ENCODE measurements at regions of chr4 and their contacts with region 1.

Region 1: DNA sequence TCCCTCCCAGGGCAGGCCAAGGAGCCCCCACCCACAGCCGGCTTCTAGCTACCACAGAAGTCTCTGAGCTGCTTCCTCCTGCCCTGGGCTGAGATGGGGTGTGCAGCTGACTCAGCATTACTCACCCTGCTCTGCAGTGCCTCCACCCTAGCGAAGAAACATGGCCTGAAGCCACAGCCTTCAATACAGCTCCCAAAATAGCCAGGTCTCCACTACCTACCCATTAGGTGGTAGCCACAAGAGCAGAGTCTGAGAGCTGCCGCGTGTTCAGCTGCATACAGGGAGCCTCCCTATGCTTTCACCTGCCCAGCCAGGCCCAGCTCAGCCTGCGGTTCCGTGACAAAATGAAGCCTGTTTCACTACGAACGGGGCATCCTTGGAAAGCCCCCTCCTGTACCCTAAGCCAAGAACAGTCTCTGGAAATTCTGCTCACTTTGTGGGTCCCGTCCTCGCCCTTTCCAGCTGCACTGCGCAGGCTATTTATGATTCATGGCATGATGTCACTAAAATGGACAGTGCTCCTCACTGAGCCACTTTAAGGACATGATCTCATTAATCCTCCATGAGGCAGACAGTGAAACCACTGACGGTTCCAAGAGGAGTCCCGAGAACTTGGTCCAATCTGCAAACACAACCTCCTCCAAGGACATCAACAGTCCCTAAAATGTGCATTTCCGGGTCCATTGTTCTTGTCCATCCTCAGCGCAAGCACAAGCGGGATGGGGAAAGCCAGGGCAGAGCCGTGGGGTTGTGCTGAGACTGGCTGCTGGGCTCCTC is 20.2 kb downstream of the WDR1 start:
- DNase-seq: peak; percentile 39 to 88 (median 77)
- ATAC-seq: peak; percentile 75
- H3K4me3 ChIP-seq: no peak overlapping the region
- H3K4me3 Mint-ChIP-seq: peak overlapping the region; percentile 49
- H3K27ac ChIP-seq: peak overlapping the region; percentile 58 to 59
- H3K27ac Mint-ChIP-seq: peak overlapping the region; percentile 99
- H3K4me1 ChIP-seq: peaks cover 99% of the 10 kb centered on the region
- H3K4me1 Mint-ChIP-seq: peaks cover 97% of the 10 kb centered on the region
- H3K27me3 ChIP-seq: no peaks in the 10 kb centered on the region
- H3K27me3 Mint-ChIP-seq: no peaks in the 10 kb centered on the region
- CTCF ChIP-seq: no peak

Region 2: GRCh38 chr4:10106421-10107039 is 10.1 kb after region 1 on chr4:
- CTCF ChIA-PET with region 1: interaction called, 8 read pairs
- POLR2A ChIA-PET with region 1: interaction called, 57 read pairs
- intact Hi-C with region 1: loop called in 1 of 2 experiments (anchors 1 kb)
- DNase-seq: peak in 13 of 14 experiments; percentile 47 to 86 (median 67)
- ATAC-seq: peak; percentile 78
- H3K4me3 ChIP-seq: peak overlapping the region; percentile 3
- H3K4me3 Mint-ChIP-seq: peak overlapping the region; percentile 74
- H3K27ac ChIP-seq: peak overlapping the region; percentile 69 to 74
- H3K27ac Mint-ChIP-seq: peak overlapping the region; percentile 99
- H3K4me1 ChIP-seq: peaks cover 100% of the 10 kb centered on the region
- H3K4me1 Mint-ChIP-seq: peaks cover 100% of the 10 kb centered on the region
- H3K27me3 ChIP-seq: no peaks in the 10 kb centered on the region
- H3K27me3 Mint-ChIP-seq: no peaks in the 10 kb centered on the region
- CTCF ChIP-seq: no peak

Region 3: DNA sequence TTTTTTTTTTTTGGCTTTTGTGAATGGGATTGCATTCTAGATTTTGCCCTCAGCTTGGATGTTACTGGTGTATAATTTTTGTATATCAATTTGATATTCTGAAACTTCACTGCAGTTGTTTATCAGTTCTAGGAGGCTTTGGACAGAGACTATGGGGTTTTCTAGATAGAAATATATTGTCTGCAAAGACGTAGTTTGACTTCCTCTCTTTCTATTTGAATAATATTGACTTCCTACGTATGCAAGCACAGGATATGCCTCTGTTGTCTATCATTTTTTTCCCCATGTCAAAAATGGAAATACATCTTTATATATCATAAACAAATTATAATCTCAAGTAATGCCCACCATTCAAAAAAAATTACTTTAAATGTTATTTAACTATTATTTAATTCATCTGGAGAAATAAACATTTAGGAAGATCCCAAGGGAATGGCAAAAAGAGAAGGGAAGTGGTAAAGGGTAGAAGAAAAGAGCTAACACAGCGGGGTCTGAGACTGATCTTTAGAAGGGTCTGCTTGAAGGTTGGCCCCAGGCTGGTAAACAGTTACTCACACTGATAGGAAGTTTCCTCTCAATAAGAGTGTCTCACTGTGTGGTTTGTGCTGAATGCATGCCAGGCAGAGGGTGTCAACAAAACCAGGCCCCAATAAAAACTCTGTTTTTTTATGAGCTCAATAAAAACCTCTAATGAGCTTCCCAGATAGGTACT is 325.1 kb after region 1 on chr4:
- CTCF ChIA-PET with region 1: no interaction called
- POLR2A ChIA-PET with region 1: no interaction called
- intact Hi-C with region 1: no loop called
- DNase-seq: no peak
- ATAC-seq: peak; percentile 60
- H3K4me3 ChIP-seq: no peak overlapping the region
- H3K4me3 Mint-ChIP-seq: no peak overlapping the region
- H3K27ac ChIP-seq: no peak overlapping the region
- H3K27ac Mint-ChIP-seq: peak overlapping the region; percentile 79
- H3K4me1 ChIP-seq: peaks cover 3% of the 10 kb centered on the region
- H3K4me1 Mint-ChIP-seq: peaks cover 8% of the 10 kb centered on the region
- H3K27me3 ChIP-seq: no peaks in the 10 kb centered on the region
- H3K27me3 Mint-ChIP-seq: no peaks in the 10 kb centered on the region
- CTCF ChIP-seq: no peak

Measured in CD4-positive, alpha-beta T cell (primary cell).